GM12878 (cell line): ENCODE measurements at regions of chr3 and their contacts with region 1.

Region 1: GRCh38 chr3:43907508-43907858 is 216.7 kb downstream of the ABHD5 start:
- DNase-seq: peak; percentile 53
- ATAC-seq: peak; percentile 99
- H3K4me3 ChIP-seq: no peak overlapping the region
- H3K27ac ChIP-seq: no peak overlapping the region
- H3K4me1 ChIP-seq: peaks cover 18% of the 10 kb centered on the region
- H3K27me3 ChIP-seq: no peaks in the 10 kb centered on the region
- CTCF ChIP-seq: no peak
- EP300 ChIP-seq: peak; percentile 59 to 87; a peak in 3 of 4 replicates
- POLR2A ChIP-seq: no peak
- RAD21 ChIP-seq: no peak

Region 2: DNA sequence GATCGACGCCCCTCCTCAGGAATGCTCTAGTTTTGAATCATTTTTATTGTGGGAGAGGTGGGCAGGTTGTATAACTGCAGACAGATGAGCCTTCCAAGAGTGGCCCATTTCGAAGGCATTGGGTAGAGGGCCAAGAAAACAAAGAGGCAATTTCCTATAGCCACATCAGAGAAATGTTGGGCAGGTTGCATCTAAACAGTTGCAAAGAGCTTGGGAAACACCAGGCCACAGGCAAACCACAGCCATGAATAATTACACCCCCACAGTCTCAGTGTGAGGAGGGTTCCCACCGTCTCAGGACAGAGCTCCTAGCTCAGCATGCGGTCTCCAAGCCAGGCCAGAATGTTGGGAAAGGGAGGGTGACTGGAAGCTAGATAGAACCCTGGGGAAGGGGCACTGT is 40.5 kb after region 1 on chr3:
- CTCF ChIA-PET with region 1: no interaction called
- POLR2A ChIA-PET with region 1: no interaction called
- RAD21 ChIA-PET with region 1: interaction called, 4 read pairs
- SMC1A ChIA-PET with region 1: interaction called, 10 read pairs
- in situ Hi-C with region 1: no loop called
- intact Hi-C with region 1: no loop called
- DNase-seq: no peak
- ATAC-seq: peak; percentile 49; the same call in 2 of the 3 replicates
- H3K4me3 ChIP-seq: no peak overlapping the region
- H3K27ac ChIP-seq: no peak overlapping the region
- H3K4me1 ChIP-seq: peaks cover 24% of the 10 kb centered on the region
- H3K27me3 ChIP-seq: no peaks in the 10 kb centered on the region; a peak in 1 of 4 replicates
- CTCF ChIP-seq: no peak
- EP300 ChIP-seq: no peak
- POLR2A ChIP-seq: no peak
- RAD21 ChIP-seq: no peak